Activated naive CD8-positive, alpha-beta T cell treated with anti-CD3 and anti-CD28 coated beads, Interleukin-2, amount 10 ng/mL, durations not matched to agents 7 days and 5 days (primary cell): ENCODE measurements at regions of chr1 and their contacts with region 1.

Region 1: DNA sequence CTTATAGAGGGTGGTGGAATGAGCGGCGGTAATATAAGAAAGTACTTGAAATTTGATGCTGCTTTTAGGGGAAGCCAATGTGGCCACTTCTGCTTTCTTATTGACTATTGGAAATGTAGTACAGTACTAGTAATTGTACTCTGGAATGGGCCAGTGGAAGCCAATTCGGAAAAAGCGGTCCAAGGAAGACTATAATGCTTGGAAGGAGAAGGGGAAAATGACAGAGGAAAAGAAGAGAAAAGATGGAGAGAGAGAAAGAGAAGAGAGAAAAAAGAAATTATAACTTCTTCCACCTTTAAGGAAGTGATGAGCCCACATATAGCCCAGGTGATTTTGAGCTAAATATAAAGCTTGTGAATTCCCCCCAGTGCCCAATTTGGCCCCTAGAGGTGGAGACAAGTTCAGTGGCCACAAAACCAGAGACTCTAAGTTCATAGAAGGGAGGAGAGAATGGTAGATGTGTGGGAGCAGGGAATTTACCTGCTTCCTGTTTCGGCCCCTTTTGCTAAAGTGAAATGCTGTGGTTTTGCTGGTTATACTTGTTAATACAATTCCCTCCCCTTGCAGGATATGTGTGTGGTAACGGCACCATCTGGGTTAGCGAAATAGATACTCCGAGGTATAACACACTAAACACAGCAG is 35.7 kb upstream of the DUSP10 start:
- DNase-seq: no peak
- ATAC-seq: peak; percentile 63
- H3K4me3 Mint-ChIP-seq: peak overlapping the region; percentile 55
- H3K27ac Mint-ChIP-seq: peak overlapping the region; percentile 93
- H3K4me1 Mint-ChIP-seq: peaks cover 72% of the 10 kb centered on the region
- H3K27me3 Mint-ChIP-seq: no peaks in the 10 kb centered on the region

Region 2: DNA sequence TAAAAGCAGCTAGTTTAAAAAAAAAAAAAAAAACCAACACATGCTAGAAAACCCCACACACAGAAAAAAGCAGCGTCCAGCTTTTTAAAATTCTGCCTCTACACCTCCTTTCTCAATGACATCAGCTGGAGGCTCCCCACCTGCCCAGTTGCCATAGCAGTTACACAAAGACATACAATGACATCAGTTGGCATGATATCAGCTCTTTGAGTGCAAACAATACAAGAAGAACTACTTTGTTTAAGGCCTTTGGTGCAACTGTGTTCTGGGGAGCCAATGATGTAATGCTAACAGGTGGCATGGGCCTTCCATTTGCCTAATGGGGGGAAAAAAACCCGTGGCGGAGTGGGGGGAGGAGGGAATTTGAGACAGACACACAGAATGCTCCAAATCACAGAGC is 68.6 kb before region 1 on chr1:
- POLR2A ChIA-PET with region 1: interaction called, 11 read pairs
- DNase-seq: no peak
- ATAC-seq: peak; percentile 4
- H3K4me3 Mint-ChIP-seq: no peak overlapping the region
- H3K27ac Mint-ChIP-seq: peak overlapping the region; percentile 61
- H3K4me1 Mint-ChIP-seq: peaks cover 60% of the 10 kb centered on the region
- H3K27me3 Mint-ChIP-seq: no peaks in the 10 kb centered on the region

Region 3: GRCh38 chr1:221734187-221734586 is 43.4 kb before region 1 on chr1:
- POLR2A ChIA-PET with region 1: no interaction called
- DNase-seq: no peak
- ATAC-seq: no peak
- H3K4me3 Mint-ChIP-seq: peak overlapping the region; percentile 15
- H3K27ac Mint-ChIP-seq: no peak overlapping the region
- H3K4me1 Mint-ChIP-seq: peaks cover 70% of the 10 kb centered on the region
- H3K27me3 Mint-ChIP-seq: no peaks in the 10 kb centered on the region

Region 4: GRCh38 chr1:221829327-221830015 is 51.9 kb after region 1 on chr1:
- POLR2A ChIA-PET with region 1: interaction called, 18 read pairs
- DNase-seq: no peak
- ATAC-seq: peak; percentile 81
- H3K4me3 Mint-ChIP-seq: peak overlapping the region; percentile 82
- H3K27ac Mint-ChIP-seq: peak overlapping the region; percentile 97
- H3K4me1 Mint-ChIP-seq: peaks cover 72% of the 10 kb centered on the region
- H3K27me3 Mint-ChIP-seq: no peaks in the 10 kb centered on the region